ENCODE measurements at regions of chr3 and their contacts with region 1.

Region 1: GRCh38 chr3:132456571-132456970 is 39.3 kb downstream of the DNAJC13 start:
- DNase-seq: no peak
- ATAC-seq: no peak
- H3K4me3 ChIP-seq: no peak overlapping the region
- H3K27ac ChIP-seq: no peak overlapping the region
- H3K4me1 ChIP-seq: no peaks in the 10 kb centered on the region
- H3K27me3 ChIP-seq: no peaks in the 10 kb centered on the region
- CTCF ChIP-seq: no peak

Region 2: DNA sequence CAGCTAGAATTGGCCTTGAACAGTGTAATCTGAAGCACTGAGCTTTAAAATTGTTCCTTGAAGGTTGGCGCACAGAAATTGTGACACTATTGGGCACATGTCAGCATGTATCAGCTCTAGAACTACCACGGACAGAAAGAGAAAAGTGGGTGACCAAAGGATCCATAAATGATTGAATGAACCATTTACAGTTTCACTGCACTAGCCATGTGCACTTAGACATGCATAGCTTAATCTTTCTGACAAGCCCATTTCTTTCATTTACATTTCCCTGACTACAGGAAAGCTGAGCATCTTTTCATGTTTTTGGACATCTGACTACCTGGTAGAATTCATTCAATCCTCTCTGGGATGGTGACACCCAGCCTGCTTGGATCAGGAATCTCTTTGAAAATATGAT is 1038.8 kb before region 1 on chr3:
- intact Hi-C with region 1: no loop called
- DNase-seq: no peak
- ATAC-seq: no peak
- H3K4me3 ChIP-seq: no peak overlapping the region
- H3K27ac ChIP-seq: no peak overlapping the region
- H3K4me1 ChIP-seq: no peaks in the 10 kb centered on the region
- H3K27me3 ChIP-seq: no peaks in the 10 kb centered on the region
- CTCF ChIP-seq: no peak

Region 3: DNA sequence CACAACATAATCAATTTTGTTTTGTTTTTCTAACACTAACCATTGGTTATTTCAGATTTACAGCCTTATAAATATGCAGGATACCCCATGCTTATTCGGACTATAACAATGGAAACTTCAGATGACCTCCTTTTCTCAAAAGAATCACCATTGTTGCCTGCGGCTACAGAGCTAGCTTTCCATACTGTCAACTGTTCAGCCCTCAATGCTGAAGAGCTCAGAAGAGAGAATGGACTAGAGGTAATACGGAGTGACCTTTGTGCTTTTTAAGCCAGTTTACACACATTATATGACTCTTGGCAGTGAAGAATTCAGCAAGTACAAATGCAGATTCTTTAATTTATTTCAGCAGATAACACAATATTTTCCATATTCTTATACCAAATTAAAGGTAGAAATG is 42.5 kb after region 1 on chr3:
- intact Hi-C with region 1: loop called in 1 of 2 experiments (anchors 5 kb)
- DNase-seq: no peak
- ATAC-seq: no peak
- H3K4me3 ChIP-seq: no peak overlapping the region
- H3K27ac ChIP-seq: no peak overlapping the region
- H3K4me1 ChIP-seq: no peaks in the 10 kb centered on the region
- H3K27me3 ChIP-seq: no peaks in the 10 kb centered on the region
- CTCF ChIP-seq: no peak